Esophagus muscularis mucosa (tissue), 4 donors: ENCODE measurements at regions of chr22 and their contacts with region 1.

Region 1: GRCh38 chr22:38569972-38570778 is at the start of gene DMC1:
- DNase-seq: peak; percentile 98
- H3K4me3 ChIP-seq: peak within 1 kb of the TSS; percentile 65 to 82 (median 70)
- H3K27ac ChIP-seq: peak within 1 kb of the TSS; percentile 81 to 88 (median 86)
- H3K4me1 ChIP-seq: peaks cover 10 to 28% (median 20%) of the 10 kb centered on the region in 4 donors
- H3K27me3 ChIP-seq: no peaks in the 10 kb centered on the region
- CTCF ChIP-seq: no peak
- EP300 ChIP-seq: no peak
- POLR2A ChIP-seq: no peak
- total RNA-seq, gene DMC1: 1.3 to 6.5 (median 1.6) TPM

Region 2: GRCh38 chr22:38056969-38057891 is 512.9 kb before region 1 on chr22 and contains the start of gene PICK1:
- intact Hi-C with region 1: loop called (anchors 5 kb)
- DNase-seq: peak; percentile 97
- H3K4me3 ChIP-seq: peak within 1 kb of the TSS; percentile 62 to 84 (median 68)
- H3K27ac ChIP-seq: peak within 1 kb of the TSS; percentile 81 to 90 (median 84)
- H3K4me1 ChIP-seq: peaks cover 18 to 28% (median 23%) of the 10 kb centered on the region in 4 donors
- H3K27me3 ChIP-seq: peaks cover 0 to 8% (median 0%) of the 10 kb centered on the region in 4 donors
- CTCF ChIP-seq: no peak
- EP300 ChIP-seq: no peak
- POLR2A ChIP-seq: no peak
- total RNA-seq, gene PICK1: 23.3 to 36.1 (median 31.1) TPM

Region 3: GRCh38 chr22:38135133-38135751 is 434.9 kb before region 1 on chr22:
- intact Hi-C with region 1: no loop called
- DNase-seq: no peak
- H3K4me3 ChIP-seq: no peak overlapping the region
- H3K27ac ChIP-seq: no peak overlapping the region
- H3K4me1 ChIP-seq: peaks cover 0 to 5% (median 2%) of the 10 kb centered on the region in 4 donors
- H3K27me3 ChIP-seq: no peaks in the 10 kb centered on the region
- CTCF ChIP-seq: no peak
- EP300 ChIP-seq: no peak
- POLR2A ChIP-seq: no peak

Region 4: DNA sequence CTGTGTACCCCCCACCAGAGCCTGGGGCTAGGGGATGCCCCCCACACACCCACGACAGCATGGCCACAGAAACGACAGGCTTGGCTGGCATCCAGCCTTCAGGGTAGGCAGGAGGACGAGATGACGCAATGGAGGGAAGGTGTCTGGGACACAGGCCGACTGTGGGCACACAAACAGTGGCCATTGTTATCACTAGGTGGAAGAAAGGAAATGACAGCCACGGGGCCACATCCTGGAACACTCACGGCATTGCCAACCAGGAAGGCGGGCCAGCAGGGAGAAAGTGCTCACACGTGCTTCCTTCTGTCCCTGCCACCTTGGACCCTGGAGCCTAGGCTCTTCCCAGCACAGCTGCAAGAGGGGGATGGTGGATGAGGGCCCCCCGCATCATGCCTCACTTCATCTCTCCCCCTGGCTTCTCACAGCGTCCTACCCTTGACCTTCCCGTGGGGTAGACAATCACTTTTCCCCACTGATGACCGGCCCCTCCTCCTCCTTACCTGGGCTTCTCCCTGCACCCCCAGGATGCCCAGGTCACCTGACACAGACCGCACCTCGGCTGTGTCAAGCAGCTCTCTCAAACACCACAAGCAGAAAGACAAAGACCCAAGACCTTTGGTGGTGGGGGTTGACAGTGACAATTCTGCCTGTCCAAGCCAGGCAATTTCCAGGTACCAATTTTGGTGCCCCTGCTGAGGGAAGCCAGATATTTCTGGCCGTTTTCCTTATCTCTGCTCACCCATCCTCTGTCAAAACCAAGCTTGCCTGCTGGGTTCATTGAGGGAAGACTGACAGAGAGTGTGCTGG is 397.1 kb before region 1 on chr22:
- intact Hi-C with region 1: no loop called
- DNase-seq: no peak
- H3K4me3 ChIP-seq: no peak overlapping the region
- H3K27ac ChIP-seq: peak overlapping the region in 3 of 4 donors; percentile 19 to 45 (median 42)
- H3K4me1 ChIP-seq: peaks cover 43 to 63% (median 60%) of the 10 kb centered on the region in 4 donors
- H3K27me3 ChIP-seq: no peaks in the 10 kb centered on the region
- CTCF ChIP-seq: no peak
- EP300 ChIP-seq: no peak
- POLR2A ChIP-seq: no peak

Region 5: GRCh38 chr22:38412435-38413084 is 157.6 kb before region 1 on chr22:
- intact Hi-C with region 1: loop called (anchors 5 kb)
- DNase-seq: peak; percentile 57
- H3K4me3 ChIP-seq: peak overlapping the region; percentile 37 to 52 (median 42)
- H3K27ac ChIP-seq: no peak overlapping the region
- H3K4me1 ChIP-seq: peaks cover 11 to 15% (median 14%) of the 10 kb centered on the region in 4 donors
- H3K27me3 ChIP-seq: peaks cover 0 to 5% (median 0%) of the 10 kb centered on the region in 4 donors
- CTCF ChIP-seq: peak; percentile 73 to 87 (median 79)
- EP300 ChIP-seq: no peak
- POLR2A ChIP-seq: no peak

Region 6: GRCh38 chr22:38506118-38506962 is 63.8 kb before region 1 on chr22 and contains the start of gene DDX17:
- intact Hi-C with region 1: loop called (anchors 2 kb)
- DNase-seq: peak; percentile 99
- H3K4me3 ChIP-seq: peak within 1 kb of the TSS; percentile 80 to 92 (median 86)
- H3K27ac ChIP-seq: peak within 1 kb of the TSS; percentile 99 to 100 (median 99)
- H3K4me1 ChIP-seq: peaks cover 37 to 46% (median 42%) of the 10 kb centered on the region in 4 donors
- H3K27me3 ChIP-seq: no peaks in the 10 kb centered on the region
- CTCF ChIP-seq: peak in 1 of 3 experiments; percentile 26
- EP300 ChIP-seq: peak; percentile 32
- POLR2A ChIP-seq: peak; percentile 53
- total RNA-seq, gene DDX17: 327 to 1,333 (median 592) TPM

Region 7: GRCh38 chr22:38608992-38609750 is 39.0 kb after region 1 on chr22:
- intact Hi-C with region 1: no loop called
- DNase-seq: no peak
- H3K4me3 ChIP-seq: no peak overlapping the region
- H3K27ac ChIP-seq: no peak overlapping the region
- H3K4me1 ChIP-seq: peaks cover 0 to 12% (median 9%) of the 10 kb centered on the region in 4 donors
- H3K27me3 ChIP-seq: no peaks in the 10 kb centered on the region
- CTCF ChIP-seq: no peak
- EP300 ChIP-seq: no peak
- POLR2A ChIP-seq: no peak